HCT116 (cell line): ENCODE measurements at regions of chr2 and their contacts with region 1.

Region 1: GRCh38 chr2:118371515-118371914 is 283.2 kb downstream of the INSIG2 start:
- DNase-seq: peak; percentile 19
- ATAC-seq: peak; percentile 89
- H3K4me3 ChIP-seq: no peak overlapping the region
- H3K27ac ChIP-seq: no peak overlapping the region
- H3K4me1 ChIP-seq: no peaks in the 10 kb centered on the region
- H3K27me3 ChIP-seq: no peaks in the 10 kb centered on the region
- CTCF ChIP-seq: peak; percentile 63 to 78 (median 69); a peak in 5 of 6 replicates
- POLR2A ChIP-seq: no peak
- RAD21 ChIP-seq: peak; percentile 80

Region 2: GRCh38 chr2:118186110-118186857 is 185.2 kb before region 1 on chr2:
- CTCF ChIA-PET with region 1: no interaction called
- POLR2A ChIA-PET with region 1: no interaction called
- RAD21 ChIA-PET with region 1: no interaction called
- intact Hi-C with region 1: no loop called
- DNase-seq: peak; percentile 63
- ATAC-seq: peak; percentile 88
- H3K4me3 ChIP-seq: peak overlapping the region; percentile 61 to 65
- H3K27ac ChIP-seq: peak overlapping the region; percentile 66
- H3K4me1 ChIP-seq: peaks cover 14 to 29% of the 10 kb centered on the region in 2 experiments; a peak in 3 of 4 replicates
- H3K27me3 ChIP-seq: no peaks in the 10 kb centered on the region
- CTCF ChIP-seq: peak in 1 of 3 experiments; percentile 14; a peak in 1 of 6 replicates
- POLR2A ChIP-seq: no peak
- RAD21 ChIP-seq: no peak

Region 3: DNA sequence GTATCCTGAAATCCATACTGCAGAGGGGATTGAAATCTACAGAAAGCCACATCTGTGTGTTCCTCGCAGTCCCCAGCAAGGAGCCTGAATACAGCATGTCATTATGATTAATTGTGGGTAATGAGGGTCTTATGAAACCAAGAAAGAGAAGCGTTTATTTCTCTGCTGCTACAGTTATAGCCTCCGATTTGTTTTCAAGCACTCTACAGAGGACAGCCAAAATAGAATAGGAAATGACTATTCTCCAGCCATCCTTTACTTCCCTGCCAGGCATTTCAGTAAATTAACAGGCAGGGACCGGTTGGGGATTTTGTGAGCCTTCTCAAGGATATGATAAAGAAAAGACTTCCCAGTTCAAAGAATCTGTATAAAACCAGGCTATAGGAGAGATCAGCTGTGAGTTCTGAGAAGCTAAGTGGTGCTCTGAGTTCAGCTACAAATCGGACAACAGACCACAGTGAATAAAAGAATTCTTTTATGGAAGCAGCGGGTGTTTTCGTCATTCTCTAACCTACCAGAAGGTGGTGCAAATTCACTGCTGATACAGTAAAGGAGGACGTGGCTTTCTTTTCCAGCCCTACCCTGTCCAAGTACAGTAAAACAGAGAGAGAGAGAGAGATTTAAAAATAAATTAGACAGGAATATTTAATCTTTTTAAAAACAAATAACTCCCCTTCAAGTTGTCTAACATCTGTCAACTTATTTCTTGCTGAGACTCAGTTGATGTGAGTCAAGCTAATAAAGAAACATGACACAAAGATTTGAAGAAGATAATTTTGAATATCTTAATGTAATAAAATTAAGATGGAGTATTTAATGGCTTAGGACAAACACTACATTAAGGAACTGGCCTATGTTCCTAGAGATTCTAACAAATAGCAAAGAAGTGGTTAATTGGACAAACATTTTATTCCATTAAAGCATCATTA is 149.6 kb before region 1 on chr2:
- CTCF ChIA-PET with region 1: interaction called, 4 read pairs
- POLR2A ChIA-PET with region 1: no interaction called
- RAD21 ChIA-PET with region 1: no interaction called
- intact Hi-C with region 1: loop called (anchors 1 kb)
- DNase-seq: peak; percentile 53
- ATAC-seq: peak; percentile 97
- H3K4me3 ChIP-seq: no peak overlapping the region
- H3K27ac ChIP-seq: no peak overlapping the region
- H3K4me1 ChIP-seq: no peaks in the 10 kb centered on the region
- H3K27me3 ChIP-seq: no peaks in the 10 kb centered on the region
- CTCF ChIP-seq: peak; percentile 64 to 84 (median 67)
- POLR2A ChIP-seq: no peak
- RAD21 ChIP-seq: peak; percentile 87